ENCODE measurements at regions of chr5 and their contacts with region 1.

Region 1: DNA sequence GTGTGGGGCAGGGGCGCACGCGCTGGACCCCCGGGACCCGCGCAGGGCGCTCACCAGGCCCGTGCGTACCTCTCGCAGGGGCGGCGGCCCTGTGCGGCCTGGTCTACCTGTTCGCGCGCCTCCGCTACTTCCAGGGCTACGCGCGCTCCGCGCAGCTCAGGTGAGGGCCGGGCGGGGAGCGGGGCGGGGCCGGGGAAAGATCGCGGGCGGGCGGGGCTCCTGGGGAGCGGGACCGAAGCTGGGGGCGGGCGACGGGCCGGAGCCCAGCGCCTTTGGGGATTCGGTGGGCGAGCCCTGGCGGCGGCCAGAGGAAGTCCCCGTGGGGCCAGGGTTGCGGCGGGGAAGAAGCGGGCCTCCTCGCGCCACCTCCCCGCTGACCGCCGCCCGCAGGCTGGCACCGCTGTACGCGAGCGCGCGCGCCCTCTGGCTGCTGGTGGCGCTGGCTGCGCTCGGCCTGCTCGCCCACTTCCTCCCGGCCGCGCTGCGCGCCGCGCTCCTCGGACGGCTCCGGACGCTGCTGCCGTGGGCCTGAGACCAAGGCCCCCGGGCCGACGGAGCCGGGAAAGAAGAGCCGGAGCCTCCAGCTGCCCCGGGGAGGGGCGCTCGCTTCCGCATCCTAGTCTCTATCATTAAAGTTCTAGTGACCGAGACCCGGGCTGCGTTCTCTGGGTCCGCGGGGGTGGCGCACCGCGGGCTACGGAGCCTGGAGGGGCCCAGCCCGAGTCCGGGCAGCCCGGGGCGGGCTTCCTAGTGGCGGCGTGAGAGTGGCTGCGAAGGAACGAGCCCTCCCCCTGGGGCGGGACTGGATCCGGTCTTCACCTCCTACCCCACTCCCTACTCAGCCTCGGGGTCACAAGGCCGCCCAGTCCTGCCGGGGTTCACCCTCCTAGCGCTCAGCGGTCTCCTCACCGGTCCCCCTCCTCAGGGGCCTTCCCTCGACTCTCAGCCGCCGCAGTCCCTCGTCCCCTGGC is 2.4 kb downstream of the LTC4S start:
- DNase-seq: peak; percentile 88
- H3K4me3 Mint-ChIP-seq: peak overlapping the region; percentile 71
- H3K27ac Mint-ChIP-seq: peak overlapping the region; percentile 26
- H3K4me1 Mint-ChIP-seq: peaks cover 8% of the 10 kb centered on the region
- H3K27me3 Mint-ChIP-seq: no peaks in the 10 kb centered on the region
- CTCF ChIP-seq: peak; percentile 86

Region 2: DNA sequence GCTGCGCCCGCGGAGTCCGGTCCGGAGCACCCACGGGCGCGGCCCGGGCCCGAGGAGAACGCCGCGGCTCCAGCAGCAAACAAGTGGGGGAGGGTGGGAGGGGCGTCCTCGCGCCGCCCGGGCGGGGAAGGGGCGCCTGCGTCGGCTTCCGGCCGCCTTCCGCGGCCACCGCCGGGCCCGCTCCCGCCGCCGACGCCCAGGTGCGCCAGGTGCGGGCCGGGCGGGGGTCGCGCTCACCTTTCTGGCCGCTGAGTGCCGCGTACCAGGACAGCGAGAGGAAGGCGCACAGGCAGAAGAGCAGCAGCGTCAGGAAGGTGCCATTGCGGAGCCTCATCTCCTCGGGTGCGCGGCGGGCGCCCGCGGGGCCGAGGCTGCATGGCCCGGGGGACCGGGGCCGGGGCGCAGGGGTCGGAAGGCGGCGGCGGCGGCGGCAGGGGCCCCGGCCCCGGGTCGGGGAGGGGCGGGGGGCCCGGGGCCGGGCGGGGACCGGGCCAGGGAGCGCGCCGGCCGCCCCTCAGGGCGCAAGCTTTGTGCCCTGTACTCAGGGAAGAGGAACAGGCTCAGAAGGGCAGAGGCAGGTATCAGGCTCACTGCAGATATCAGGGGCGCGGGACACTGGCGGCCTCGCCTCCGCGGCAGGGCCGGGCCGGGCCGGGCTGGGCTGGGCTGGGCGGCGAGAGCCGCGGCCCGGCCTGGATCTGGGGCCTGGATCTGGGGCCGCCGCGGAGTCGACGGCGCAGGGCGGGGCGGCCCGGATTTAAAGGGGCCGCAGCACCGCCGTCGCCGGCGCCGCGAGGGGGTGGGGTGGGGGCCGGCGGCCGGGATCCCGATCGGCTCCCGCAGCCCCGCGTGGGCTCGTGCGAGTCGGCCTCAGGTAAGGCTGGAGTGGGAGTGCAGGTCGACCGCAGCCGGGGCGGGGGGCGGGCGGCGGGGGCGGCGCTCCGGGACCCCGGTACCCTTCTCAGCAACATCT is 10.4 kb after region 1 on chr5 and contains the start of gene MGAT4B:
- CTCF ChIA-PET with region 1: interaction called, 10 read pairs
- POLR2A ChIA-PET with region 1: interaction called, 29 read pairs
- intact Hi-C with region 1: no loop called
- DNase-seq: peak; percentile 87
- H3K4me3 Mint-ChIP-seq: peak within 1 kb of the TSS; percentile 82
- H3K27ac Mint-ChIP-seq: peak within 1 kb of the TSS; percentile 92
- H3K4me1 Mint-ChIP-seq: peaks cover 29% of the 10 kb centered on the region
- H3K27me3 Mint-ChIP-seq: no peaks in the 10 kb centered on the region
- CTCF ChIP-seq: no peak
- total RNA-seq, gene MGAT4B: 153 and 198 TPM in 2 replicates

Region 3: GRCh38 chr5:179879010-179879689 is 83.0 kb after region 1 on chr5:
- CTCF ChIA-PET with region 1: no interaction called
- POLR2A ChIA-PET with region 1: no interaction called
- intact Hi-C with region 1: no loop called
- DNase-seq: no peak
- H3K4me3 Mint-ChIP-seq: no peak overlapping the region
- H3K27ac Mint-ChIP-seq: no peak overlapping the region
- H3K4me1 Mint-ChIP-seq: no peaks in the 10 kb centered on the region
- H3K27me3 Mint-ChIP-seq: no peaks in the 10 kb centered on the region
- CTCF ChIP-seq: no peak

Region 4: GRCh38 chr5:179986328-179986727 is 190.2 kb after region 1 on chr5:
- CTCF ChIA-PET with region 1: no interaction called
- POLR2A ChIA-PET with region 1: no interaction called
- intact Hi-C with region 1: no loop called
- DNase-seq: peak; percentile 9
- H3K4me3 Mint-ChIP-seq: no peak overlapping the region
- H3K27ac Mint-ChIP-seq: no peak overlapping the region
- H3K4me1 Mint-ChIP-seq: no peaks in the 10 kb centered on the region
- H3K27me3 Mint-ChIP-seq: no peaks in the 10 kb centered on the region
- CTCF ChIP-seq: no peak

Region 5: DNA sequence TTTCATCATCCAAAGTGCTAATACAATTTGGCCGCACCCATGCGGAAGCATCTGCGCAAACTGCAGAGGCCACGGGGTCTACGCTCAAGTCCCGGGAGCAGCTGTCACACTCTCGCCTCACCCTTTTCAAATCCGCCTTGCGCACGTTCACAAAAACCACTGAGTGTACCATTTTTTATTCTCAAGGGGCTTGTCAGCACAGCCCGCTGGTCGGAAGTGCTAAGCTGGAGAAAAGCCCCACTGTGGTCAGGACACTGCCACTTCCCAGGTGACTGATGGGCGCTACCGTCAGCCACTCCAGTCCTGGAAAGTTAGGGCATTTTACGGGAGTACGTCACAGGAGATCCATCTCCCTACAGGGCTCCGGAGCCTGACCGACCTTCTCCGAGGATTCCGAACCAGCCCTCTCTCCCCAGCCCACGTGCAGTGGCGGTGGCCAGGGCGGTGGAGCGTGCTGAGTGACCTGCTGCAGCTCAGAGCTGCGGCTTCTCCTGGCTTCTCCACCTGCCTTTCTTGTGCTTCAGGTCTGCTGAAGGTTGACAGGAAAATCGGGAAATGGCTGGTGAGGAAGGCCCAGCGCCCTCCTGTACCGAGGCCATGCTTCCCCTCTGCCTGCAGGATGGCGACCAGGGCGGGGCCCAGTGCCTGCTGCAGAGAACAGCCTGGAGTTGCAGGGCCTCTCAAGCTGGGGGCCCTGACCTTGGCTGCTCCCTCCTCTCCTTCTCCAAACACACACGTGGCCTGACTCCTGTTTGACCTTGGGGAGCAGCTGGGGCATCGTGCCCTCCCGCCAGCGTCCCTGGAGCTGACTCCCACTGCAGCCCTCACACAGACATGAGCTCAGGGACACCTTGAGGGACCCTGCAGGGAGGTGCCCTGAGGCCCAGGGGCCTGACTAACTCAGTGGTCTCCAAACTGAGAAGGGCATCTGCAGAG is 398.5 kb after region 1 on chr5:
- CTCF ChIA-PET with region 1: no interaction called
- POLR2A ChIA-PET with region 1: no interaction called
- intact Hi-C with region 1: no loop called
- DNase-seq: no peak
- H3K4me3 Mint-ChIP-seq: no peak overlapping the region
- H3K27ac Mint-ChIP-seq: no peak overlapping the region
- H3K4me1 Mint-ChIP-seq: no peaks in the 10 kb centered on the region
- H3K27me3 Mint-ChIP-seq: no peaks in the 10 kb centered on the region
- CTCF ChIP-seq: no peak